Heart left ventricle (tissue), 16 donors: ENCODE measurements at regions of chr5 and their contacts with region 1.

Region 1: DNA sequence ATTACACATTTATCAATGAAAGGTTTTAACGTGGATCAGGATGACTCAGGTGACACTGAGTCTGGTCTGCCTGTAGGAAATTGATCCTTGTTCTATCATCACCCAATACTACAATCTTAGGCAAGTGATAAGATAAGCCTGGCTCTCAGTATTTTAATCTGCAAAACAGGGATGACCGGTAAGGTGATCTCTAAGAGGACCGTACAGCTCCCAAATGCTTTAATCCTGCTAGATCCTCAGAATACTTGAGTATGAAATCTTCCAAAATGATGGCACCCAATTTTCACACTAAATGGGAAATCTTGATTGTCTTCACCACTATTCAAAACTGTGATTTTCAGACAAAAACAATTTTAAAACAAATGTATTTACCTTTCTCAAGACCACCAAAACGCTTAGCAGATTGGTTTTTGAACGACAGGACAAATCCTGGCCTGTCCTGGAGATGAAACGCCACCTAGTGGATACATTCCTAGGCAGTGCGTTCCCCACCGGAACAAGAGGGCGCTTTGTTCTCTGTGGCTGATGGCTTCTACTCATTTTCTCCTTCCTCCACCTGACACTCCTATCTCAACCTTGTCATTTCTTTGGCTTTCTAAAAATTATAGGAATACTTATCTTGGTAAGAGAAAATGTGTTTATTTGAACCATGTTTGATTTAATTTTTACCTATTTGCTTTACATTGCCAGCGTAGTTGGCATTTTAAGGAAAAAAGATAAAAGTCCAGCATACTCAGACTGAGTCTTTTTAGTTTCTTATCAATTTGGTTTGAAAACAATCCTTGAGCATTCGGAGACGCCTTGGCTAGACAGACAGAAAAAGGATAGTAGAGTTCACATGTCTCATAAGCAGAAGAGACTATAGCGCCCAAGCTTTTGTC is 41.2 kb upstream of the VCAN start:
- DNase-seq: peak; percentile 34 to 56 (median 53)
- ATAC-seq: peak in 3 of 4 donors; percentile 80 to 88 (median 82)
- H3K4me3 ChIP-seq: no peak overlapping the region
- H3K27ac ChIP-seq: no peak overlapping the region
- H3K4me1 ChIP-seq: peaks cover 0 to 16% (median 0%) of the 10 kb centered on the region in 12 donors
- H3K27me3 ChIP-seq: no peaks in the 10 kb centered on the region
- CTCF ChIP-seq: peak; percentile 70 to 92 (median 84)
- POLR2A ChIP-seq: no peak

Region 2: DNA sequence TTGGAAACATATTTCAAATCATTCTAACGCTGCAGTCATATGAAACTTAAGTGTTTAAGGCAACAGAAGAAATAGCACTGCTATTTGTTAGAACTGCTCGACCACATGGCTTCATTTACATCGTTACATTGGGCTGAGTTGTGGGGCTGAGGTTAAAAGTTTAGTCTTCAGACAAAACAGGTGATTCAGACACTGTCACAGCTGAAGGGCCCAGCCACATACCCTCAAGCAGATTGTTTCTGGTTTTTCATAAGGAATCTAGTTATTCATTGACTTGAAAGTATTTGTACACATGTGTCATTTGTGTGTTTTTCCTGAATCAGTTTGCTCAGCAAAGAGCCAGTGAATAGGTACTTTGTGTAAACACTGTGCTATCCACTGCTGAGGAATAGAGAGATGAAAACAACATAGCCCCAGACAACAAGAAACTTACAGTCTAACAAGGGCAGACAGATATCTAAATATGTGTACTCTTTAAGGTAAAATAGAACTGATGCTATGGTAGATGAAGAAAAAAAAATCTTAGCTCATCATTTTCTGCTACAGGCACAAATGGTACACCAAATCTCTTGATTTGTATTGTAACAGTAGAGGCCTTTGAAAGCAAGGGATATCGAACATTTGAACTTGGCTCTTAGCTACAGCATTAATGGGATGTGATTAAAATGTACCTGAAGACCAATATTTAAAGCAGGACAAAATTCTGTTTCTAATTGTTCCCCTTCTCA is 794.6 kb before region 1 on chr5:
- intact Hi-C with region 1: loop called in 5 of 10 experiments (anchors 2 to 10 kb)
- DNase-seq: no peak
- ATAC-seq: no peak
- H3K4me3 ChIP-seq: no peak overlapping the region
- H3K27ac ChIP-seq: no peak overlapping the region
- H3K4me1 ChIP-seq: peaks cover 0 to 12% (median under 1%) of the 10 kb centered on the region in 12 donors
- H3K27me3 ChIP-seq: no peaks in the 10 kb centered on the region
- CTCF ChIP-seq: no peak
- POLR2A ChIP-seq: no peak

Region 3: GRCh38 chr5:83076742-83077661 is 353.4 kb before region 1 on chr5 and contains the starts of genes TMEM167A and XRCC4:
- intact Hi-C with region 1: loop called in 1 of 10 experiments (anchors 10 kb)
- DNase-seq: peak; percentile 97 to 99 (median 97)
- ATAC-seq: peak; percentile 100
- H3K4me3 ChIP-seq: peak within 1 kb of the TSS; percentile 62 to 97 (median 76)
- H3K27ac ChIP-seq: peak within 1 kb of the TSS; percentile 54 to 95 (median 85)
- H3K4me1 ChIP-seq: peaks cover 0 to 61% (median 37%) of the 10 kb centered on the region in 12 donors
- H3K27me3 ChIP-seq: no peaks in the 10 kb centered on the region
- CTCF ChIP-seq: no peak
- POLR2A ChIP-seq: peak in 1 of 2 donors; percentile 87
- total RNA-seq, gene TMEM167A: 21.4 to 62.7 (median 48.4) TPM
- total RNA-seq, gene XRCC4: 3.3 to 50.5 (median 8.0) TPM

Region 4: DNA sequence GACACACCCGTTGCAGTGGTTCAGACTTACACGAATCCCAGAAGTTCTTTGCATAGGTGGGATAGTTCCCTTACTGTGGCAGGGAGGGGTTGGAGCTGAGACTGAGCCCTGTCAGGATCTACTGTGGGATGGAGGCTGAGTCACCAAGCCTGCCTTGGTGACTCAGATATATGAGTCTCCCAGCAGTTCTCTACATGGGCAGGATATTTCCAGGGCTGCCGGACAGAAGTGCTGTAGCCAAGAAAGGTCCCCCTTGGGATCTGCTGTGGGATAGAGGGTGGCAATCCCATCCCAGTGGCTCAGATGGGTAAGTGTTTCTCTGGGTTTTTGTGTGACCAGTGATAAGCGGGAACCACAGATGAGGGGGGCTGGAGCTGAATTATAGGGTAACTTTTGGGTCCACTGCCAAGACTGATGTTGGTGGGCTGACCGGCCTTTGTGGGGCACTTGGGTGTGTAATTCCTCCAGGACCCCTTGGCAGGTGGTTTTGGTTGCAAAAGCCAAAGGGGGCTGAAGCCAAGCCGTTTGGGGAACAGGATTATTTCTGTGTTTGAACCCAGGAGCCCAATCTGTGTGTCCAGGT is 334.3 kb before region 1 on chr5:
- intact Hi-C with region 1: loop called in 1 of 10 experiments (anchors 10 kb)
- DNase-seq: peak in 1 of 5 donors; percentile 42
- ATAC-seq: peak in 3 of 4 donors; percentile 39 to 87 (median 80)
- H3K4me3 ChIP-seq: no peak overlapping the region
- H3K27ac ChIP-seq: peak overlapping the region in 1 of 12 donors; percentile 38
- H3K4me1 ChIP-seq: peaks cover 0 to 21% (median 13%) of the 10 kb centered on the region in 12 donors
- H3K27me3 ChIP-seq: no peaks in the 10 kb centered on the region
- CTCF ChIP-seq: no peak
- POLR2A ChIP-seq: no peak

Region 5: DNA sequence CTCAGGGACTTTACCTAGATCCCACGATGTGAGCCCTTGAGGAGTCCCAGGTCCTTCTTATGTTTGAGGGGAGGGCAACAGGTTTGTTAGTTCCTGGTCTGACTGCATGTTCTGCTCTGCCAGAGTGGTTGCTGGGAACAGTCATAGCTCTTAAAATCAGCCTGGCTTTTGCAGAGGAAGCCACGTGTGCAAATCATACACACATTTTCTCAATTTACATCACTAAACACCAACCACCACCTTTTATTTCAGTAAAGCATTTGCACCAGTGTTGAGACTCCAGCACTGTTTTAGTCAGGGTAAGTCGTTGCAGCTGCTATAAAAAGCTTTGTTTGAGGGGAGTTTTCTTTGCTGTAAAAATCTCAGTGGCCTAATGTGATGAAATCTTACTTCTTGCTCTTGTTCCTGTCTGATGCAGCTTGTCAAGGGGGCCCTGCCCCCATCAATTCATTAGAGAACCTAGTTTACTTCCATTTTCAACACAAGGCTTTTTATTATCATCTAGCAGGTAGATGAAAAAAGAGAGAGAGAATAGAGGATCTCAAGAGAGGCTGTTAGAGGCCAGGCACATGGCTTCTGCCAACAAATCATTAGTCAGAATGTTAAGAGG is 29.1 kb before region 1 on chr5:
- intact Hi-C with region 1: no loop called
- DNase-seq: no peak
- ATAC-seq: no peak
- H3K4me3 ChIP-seq: no peak overlapping the region
- H3K27ac ChIP-seq: no peak overlapping the region
- H3K4me1 ChIP-seq: peaks cover 0 to 15% (median 0%) of the 10 kb centered on the region in 12 donors
- H3K27me3 ChIP-seq: no peaks in the 10 kb centered on the region
- CTCF ChIP-seq: no peak
- POLR2A ChIP-seq: no peak

Region 6: DNA sequence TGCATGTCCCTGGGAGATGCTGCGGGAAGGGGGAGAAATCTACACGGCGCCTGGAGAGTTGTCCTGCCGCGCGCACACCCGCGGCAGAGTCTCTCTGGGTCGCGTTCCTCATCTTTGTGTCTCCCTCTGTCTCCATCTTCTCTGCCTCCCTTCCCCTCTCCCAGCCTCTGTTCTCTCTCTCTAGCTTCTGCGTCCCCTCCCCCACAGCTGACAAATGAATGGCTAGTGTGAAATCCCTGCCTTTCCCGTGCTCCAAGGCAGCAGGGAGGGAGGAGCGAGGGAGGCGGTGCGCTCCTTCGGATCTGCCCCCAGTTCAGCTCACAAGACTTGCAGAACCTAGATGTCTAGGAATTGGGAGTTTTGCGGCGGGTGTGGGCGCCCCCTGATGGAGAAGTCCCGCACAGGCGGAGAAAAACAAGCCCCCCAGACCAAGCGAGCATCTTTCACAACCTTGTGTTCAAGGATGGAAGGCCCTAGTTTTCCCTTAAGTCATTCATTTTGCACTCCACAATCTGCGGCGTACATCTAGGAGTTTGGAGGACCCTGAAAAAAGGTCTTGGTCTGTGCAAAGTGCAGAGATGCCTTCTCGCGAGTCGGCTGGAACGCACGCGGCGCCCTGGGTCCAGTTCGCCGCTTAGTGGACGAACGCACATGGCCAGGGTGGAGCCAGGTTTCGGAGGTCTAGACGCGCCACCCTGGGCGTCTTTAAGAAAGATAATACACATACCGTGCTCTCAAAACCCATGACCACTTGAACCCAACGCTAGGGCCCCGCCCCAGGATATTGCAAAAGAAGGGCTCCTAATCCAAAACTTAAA is 43.2 kb after region 1 on chr5:
- intact Hi-C with region 1: loop called in 1 of 10 experiments (anchors 5 kb)
- DNase-seq: peak; percentile 85 to 92 (median 88)
- ATAC-seq: peak; percentile 78 to 88 (median 83)
- H3K4me3 ChIP-seq: peak overlapping the region; percentile 34 to 69 (median 56)
- H3K27ac ChIP-seq: peak overlapping the region; percentile 14 to 88 (median 72)
- H3K4me1 ChIP-seq: peaks cover 0 to 54% (median 25%) of the 10 kb centered on the region in 12 donors
- H3K27me3 ChIP-seq: peaks cover 0 to 68% (median 36%) of the 10 kb centered on the region in 9 donors
- CTCF ChIP-seq: peak; percentile 70 to 92 (median 84)
- POLR2A ChIP-seq: no peak